B cell (primary cell): ENCODE measurements at regions of chr16 and their contacts with region 1.

Region 1: GRCh38 chr16:87636072-87636684 is 33.9 kb downstream of the JPH3 start:
- DNase-seq: peak; percentile 82
- ATAC-seq: peak; percentile 81
- H3K4me3 ChIP-seq: peak overlapping the region in 4 of 5 experiments; percentile 28 to 55 (median 50)
- H3K4me3 Mint-ChIP-seq: peak overlapping the region; percentile 90
- H3K27ac ChIP-seq: peak overlapping the region; percentile 26 to 49
- H3K27ac Mint-ChIP-seq: peak overlapping the region; percentile 84
- H3K4me1 ChIP-seq: peaks cover 13 to 23% of the 10 kb centered on the region in 2 donors
- H3K4me1 Mint-ChIP-seq: peaks cover 18% of the 10 kb centered on the region
- H3K27me3 ChIP-seq: peaks cover 0 to 7% (median 0%) of the 10 kb centered on the region in 4 experiments
- H3K27me3 Mint-ChIP-seq: peaks cover 16% of the 10 kb centered on the region
- CTCF ChIP-seq: peak; percentile 66

Region 2: GRCh38 chr16:87076950-87077749 is 559.0 kb before region 1 on chr16:
- CTCF ChIA-PET with region 1: no interaction called
- POLR2A ChIA-PET with region 1: no interaction called
- intact Hi-C with region 1: loop called (anchors 5 kb)
- DNase-seq: peak; percentile 35
- ATAC-seq: peak; percentile 34
- H3K4me3 ChIP-seq: no peak overlapping the region
- H3K4me3 Mint-ChIP-seq: no peak overlapping the region
- H3K27ac ChIP-seq: no peak overlapping the region
- H3K27ac Mint-ChIP-seq: peak overlapping the region; percentile 21
- H3K4me1 ChIP-seq: peaks cover 0 to 7% of the 10 kb centered on the region in 2 donors
- H3K4me1 Mint-ChIP-seq: peaks cover 5% of the 10 kb centered on the region
- H3K27me3 ChIP-seq: no peaks in the 10 kb centered on the region
- H3K27me3 Mint-ChIP-seq: peaks cover 10% of the 10 kb centered on the region
- CTCF ChIP-seq: peak; percentile 61

Region 3: DNA sequence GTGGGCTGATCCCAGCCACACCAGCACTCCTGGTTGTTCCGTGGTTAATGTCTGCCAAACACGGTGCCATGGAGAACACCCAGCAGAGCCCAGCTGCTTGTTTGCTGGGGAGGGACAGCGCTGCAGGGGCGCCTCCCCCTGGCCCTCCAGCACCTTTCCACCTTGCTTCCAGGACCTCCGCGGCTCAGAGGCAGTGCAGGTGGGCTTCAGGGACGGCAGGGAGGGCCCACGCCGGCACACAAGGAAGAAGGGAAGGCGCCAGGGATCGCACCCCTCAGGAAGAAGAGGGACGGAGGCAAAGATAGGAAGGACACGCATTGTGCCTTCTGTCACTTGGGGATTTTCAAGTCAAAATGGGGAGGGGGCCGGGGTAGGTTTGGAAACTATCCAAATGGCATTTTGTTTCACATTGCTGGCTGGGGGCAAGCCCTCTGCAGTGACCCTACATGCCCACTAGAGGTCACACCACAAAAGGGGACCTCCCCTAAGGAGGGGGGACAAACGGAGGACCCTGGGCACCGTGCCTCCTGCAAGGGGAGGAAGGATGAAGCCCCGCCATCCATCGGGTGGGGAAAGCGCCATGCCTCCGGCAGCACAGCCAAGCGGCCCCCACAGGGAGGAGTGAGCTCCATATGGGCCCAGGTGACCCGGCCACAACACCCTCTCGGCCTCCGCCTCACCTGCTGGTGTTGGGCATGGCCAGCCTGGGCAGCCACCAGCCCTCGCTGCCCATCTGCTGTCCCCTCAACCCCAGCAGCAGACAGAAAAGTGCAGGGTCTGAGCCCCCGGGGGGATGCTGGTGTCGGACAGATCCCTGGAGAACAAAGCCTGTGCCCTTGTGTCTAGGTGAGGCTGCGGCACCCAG is 311.5 kb before region 1 on chr16:
- CTCF ChIA-PET with region 1: interaction called, 12 read pairs
- POLR2A ChIA-PET with region 1: no interaction called
- intact Hi-C with region 1: no loop called
- DNase-seq: peak; percentile 69
- ATAC-seq: peak; percentile 94
- H3K4me3 ChIP-seq: no peak overlapping the region
- H3K4me3 Mint-ChIP-seq: no peak overlapping the region
- H3K27ac ChIP-seq: no peak overlapping the region
- H3K27ac Mint-ChIP-seq: no peak overlapping the region
- H3K4me1 ChIP-seq: peaks cover 0 to 4% of the 10 kb centered on the region in 2 donors
- H3K4me1 Mint-ChIP-seq: peaks cover 4% of the 10 kb centered on the region
- H3K27me3 ChIP-seq: no peaks in the 10 kb centered on the region
- H3K27me3 Mint-ChIP-seq: no peaks in the 10 kb centered on the region
- CTCF ChIP-seq: peak; percentile 88

Region 4: DNA sequence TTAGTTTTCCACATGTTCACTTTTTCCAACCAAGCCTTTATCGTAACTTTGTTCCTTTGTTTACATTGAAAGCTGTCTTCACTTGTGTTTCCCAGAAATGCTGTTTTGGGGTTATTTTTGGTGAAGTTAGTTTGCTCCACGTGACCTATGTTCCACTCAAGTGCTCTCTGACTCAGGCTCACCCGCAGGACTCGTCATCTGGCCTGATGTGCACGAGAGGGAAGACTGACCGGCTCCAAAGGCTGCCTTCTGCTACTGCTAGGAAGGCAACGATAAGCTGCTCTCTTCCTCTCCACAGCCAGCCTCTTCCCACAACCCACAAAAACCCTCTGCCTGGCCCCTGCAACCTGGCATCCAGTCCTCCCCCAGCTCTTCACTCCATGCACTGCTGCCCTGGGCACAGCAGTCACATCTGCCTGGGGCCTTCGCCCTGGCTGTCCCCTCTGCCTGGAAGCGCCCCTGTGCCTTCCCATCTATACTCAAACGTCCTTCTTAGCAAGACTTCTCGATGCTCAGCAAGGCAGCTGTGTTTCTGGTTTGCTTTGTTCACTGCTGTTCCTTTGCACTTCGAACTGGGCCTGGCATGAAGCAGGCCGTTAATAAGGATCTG is 171.4 kb before region 1 on chr16:
- CTCF ChIA-PET with region 1: interaction called, 14 read pairs
- POLR2A ChIA-PET with region 1: no interaction called
- intact Hi-C with region 1: no loop called
- DNase-seq: peak; percentile 18
- ATAC-seq: peak; percentile 68
- H3K4me3 ChIP-seq: no peak overlapping the region
- H3K4me3 Mint-ChIP-seq: peak overlapping the region; percentile 80
- H3K27ac ChIP-seq: no peak overlapping the region
- H3K27ac Mint-ChIP-seq: peak overlapping the region; percentile 85
- H3K4me1 ChIP-seq: peaks cover 14 to 16% of the 10 kb centered on the region in 2 donors
- H3K4me1 Mint-ChIP-seq: peaks cover 19% of the 10 kb centered on the region
- H3K27me3 ChIP-seq: peaks cover 0 to 10% (median 4%) of the 10 kb centered on the region in 4 experiments
- H3K27me3 Mint-ChIP-seq: peaks cover 17% of the 10 kb centered on the region
- CTCF ChIP-seq: no peak

Region 5: DNA sequence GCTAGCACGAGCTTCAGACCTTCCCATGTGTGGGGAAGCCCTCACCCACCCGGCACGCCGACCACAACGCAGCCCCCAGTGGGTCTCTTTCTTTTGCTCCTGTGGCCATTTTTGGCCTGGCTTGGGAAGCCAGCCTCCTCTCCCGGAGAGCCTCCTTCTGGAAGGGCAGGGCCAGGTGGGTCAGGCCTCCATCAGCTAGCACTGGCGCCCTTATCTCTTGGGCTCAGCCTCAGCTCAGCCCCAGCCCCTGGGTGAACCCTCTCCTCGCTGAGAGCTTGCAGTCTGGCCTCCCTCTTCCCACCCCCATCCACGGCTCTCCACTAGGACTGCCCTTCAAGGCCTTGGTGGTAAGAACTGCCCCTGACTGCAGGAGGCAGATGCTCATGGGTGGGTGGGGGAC is 48.5 kb before region 1 on chr16:
- CTCF ChIA-PET with region 1: interaction called, 13 read pairs
- POLR2A ChIA-PET with region 1: no interaction called
- intact Hi-C with region 1: loop called (anchors 1 kb)
- DNase-seq: no peak
- ATAC-seq: no peak
- H3K4me3 ChIP-seq: no peak overlapping the region
- H3K4me3 Mint-ChIP-seq: no peak overlapping the region
- H3K27ac ChIP-seq: no peak overlapping the region
- H3K27ac Mint-ChIP-seq: no peak overlapping the region
- H3K4me1 ChIP-seq: no peaks in the 10 kb centered on the region
- H3K4me1 Mint-ChIP-seq: peaks cover 2% of the 10 kb centered on the region
- H3K27me3 ChIP-seq: peaks cover 0 to 14% (median 1%) of the 10 kb centered on the region in 4 experiments
- H3K27me3 Mint-ChIP-seq: peaks cover 47% of the 10 kb centered on the region
- CTCF ChIP-seq: no peak

Region 6: GRCh38 chr16:87712184-87712762 is 76.1 kb after region 1 on chr16:
- CTCF ChIA-PET with region 1: no interaction called
- POLR2A ChIA-PET with region 1: no interaction called
- intact Hi-C with region 1: no loop called
- DNase-seq: no peak
- ATAC-seq: no peak
- H3K4me3 ChIP-seq: no peak overlapping the region
- H3K4me3 Mint-ChIP-seq: no peak overlapping the region
- H3K27ac ChIP-seq: peak overlapping the region in 1 of 2 donors; percentile 70
- H3K27ac Mint-ChIP-seq: no peak overlapping the region
- H3K4me1 ChIP-seq: peaks cover 5 to 6% of the 10 kb centered on the region in 2 donors
- H3K4me1 Mint-ChIP-seq: peaks cover 5% of the 10 kb centered on the region
- H3K27me3 ChIP-seq: no peaks in the 10 kb centered on the region
- H3K27me3 Mint-ChIP-seq: no peaks in the 10 kb centered on the region
- CTCF ChIP-seq: no peak

Region 7: GRCh38 chr16:87754535-87754934 is 118.4 kb after region 1 on chr16:
- CTCF ChIA-PET with region 1: no interaction called
- POLR2A ChIA-PET with region 1: no interaction called
- intact Hi-C with region 1: no loop called
- DNase-seq: no peak
- ATAC-seq: no peak
- H3K4me3 ChIP-seq: no peak overlapping the region
- H3K4me3 Mint-ChIP-seq: no peak overlapping the region
- H3K27ac ChIP-seq: no peak overlapping the region
- H3K27ac Mint-ChIP-seq: no peak overlapping the region
- H3K4me1 ChIP-seq: no peaks in the 10 kb centered on the region
- H3K4me1 Mint-ChIP-seq: no peaks in the 10 kb centered on the region
- H3K27me3 ChIP-seq: no peaks in the 10 kb centered on the region
- H3K27me3 Mint-ChIP-seq: no peaks in the 10 kb centered on the region
- CTCF ChIP-seq: no peak

Region 8: DNA sequence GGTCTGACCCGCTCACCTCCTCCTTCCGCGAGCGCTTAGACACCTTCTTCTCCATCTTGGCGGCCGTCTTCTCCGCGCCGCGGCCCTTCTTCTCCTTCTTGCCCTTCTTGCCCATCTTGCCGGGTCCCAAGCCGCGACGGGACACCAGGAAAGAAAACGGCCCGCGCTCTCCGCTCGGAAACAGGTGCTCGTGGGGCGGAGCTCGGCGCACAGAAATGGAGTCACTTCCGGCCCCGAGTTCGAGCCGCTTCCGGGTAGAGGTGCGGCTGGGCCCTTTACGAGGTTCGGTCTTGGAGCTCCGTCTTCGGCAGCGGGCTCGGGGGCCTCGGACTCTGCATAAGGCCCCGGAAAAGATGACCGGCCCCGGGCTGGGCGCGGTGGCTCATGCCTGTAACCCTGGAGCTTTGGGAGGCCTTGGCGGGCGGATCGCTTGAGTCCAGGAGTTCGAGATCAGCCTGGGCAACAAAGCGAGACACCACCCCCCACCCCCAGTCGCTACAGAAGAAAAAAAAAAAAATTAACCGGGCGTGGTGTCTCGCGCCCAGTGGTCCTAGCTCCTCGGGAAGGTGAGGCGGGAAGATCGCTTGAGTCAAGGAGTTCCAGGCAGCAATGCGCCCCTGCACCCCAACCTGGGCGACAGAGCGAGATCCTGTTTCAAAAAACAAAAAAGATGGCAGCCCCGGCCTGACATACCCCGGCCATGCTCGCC is 129.8 kb after region 1 on chr16 and contains the start of gene KLHDC4:
- CTCF ChIA-PET with region 1: interaction called, 30 read pairs
- POLR2A ChIA-PET with region 1: interaction called, 3 read pairs
- intact Hi-C with region 1: no loop called
- DNase-seq: peak; percentile 93
- ATAC-seq: peak; percentile 85
- H3K4me3 ChIP-seq: peak within 1 kb of the TSS; percentile 59 to 95 (median 78)
- H3K4me3 Mint-ChIP-seq: peak within 1 kb of the TSS; percentile 100
- H3K27ac ChIP-seq: peak within 1 kb of the TSS; percentile 93
- H3K27ac Mint-ChIP-seq: peak within 1 kb of the TSS; percentile 98
- H3K4me1 ChIP-seq: peaks cover 15 to 26% of the 10 kb centered on the region in 2 donors
- H3K4me1 Mint-ChIP-seq: peaks cover 36% of the 10 kb centered on the region
- H3K27me3 ChIP-seq: no peaks in the 10 kb centered on the region
- H3K27me3 Mint-ChIP-seq: no peaks in the 10 kb centered on the region
- CTCF ChIP-seq: no peak
- total RNA-seq, gene KLHDC4: 90.8 and 115 TPM in 2 replicates

Region 9: GRCh38 chr16:87948109-87948545 is 311.9 kb after region 1 on chr16:
- CTCF ChIA-PET with region 1: no interaction called
- POLR2A ChIA-PET with region 1: no interaction called
- intact Hi-C with region 1: no loop called
- DNase-seq: peak; percentile 54
- ATAC-seq: no peak
- H3K4me3 ChIP-seq: peak overlapping the region in 3 of 5 experiments; percentile 8 to 28 (median 8)
- H3K4me3 Mint-ChIP-seq: peak overlapping the region; percentile 80
- H3K27ac ChIP-seq: peak overlapping the region; percentile 58 to 67
- H3K27ac Mint-ChIP-seq: peak overlapping the region; percentile 97
- H3K4me1 ChIP-seq: peaks cover 30 to 48% of the 10 kb centered on the region in 2 donors
- H3K4me1 Mint-ChIP-seq: peaks cover 45% of the 10 kb centered on the region
- H3K27me3 ChIP-seq: no peaks in the 10 kb centered on the region
- H3K27me3 Mint-ChIP-seq: no peaks in the 10 kb centered on the region
- CTCF ChIP-seq: no peak

Region 10: GRCh38 chr16:88005181-88005581 is 369.0 kb after region 1 on chr16:
- CTCF ChIA-PET with region 1: no interaction called
- POLR2A ChIA-PET with region 1: no interaction called
- intact Hi-C with region 1: no loop called
- DNase-seq: peak; percentile 72
- ATAC-seq: peak; percentile 86
- H3K4me3 ChIP-seq: no peak overlapping the region
- H3K4me3 Mint-ChIP-seq: peak overlapping the region; percentile 33
- H3K27ac ChIP-seq: peak overlapping the region; percentile 51 to 60
- H3K27ac Mint-ChIP-seq: peak overlapping the region; percentile 54
- H3K4me1 ChIP-seq: peaks cover 17 to 24% of the 10 kb centered on the region in 2 donors
- H3K4me1 Mint-ChIP-seq: peaks cover 41% of the 10 kb centered on the region
- H3K27me3 ChIP-seq: no peaks in the 10 kb centered on the region
- H3K27me3 Mint-ChIP-seq: no peaks in the 10 kb centered on the region
- CTCF ChIP-seq: peak; percentile 72